ENCODE measurements at regions of chr9 and their contacts with region 1.

Region 1: DNA sequence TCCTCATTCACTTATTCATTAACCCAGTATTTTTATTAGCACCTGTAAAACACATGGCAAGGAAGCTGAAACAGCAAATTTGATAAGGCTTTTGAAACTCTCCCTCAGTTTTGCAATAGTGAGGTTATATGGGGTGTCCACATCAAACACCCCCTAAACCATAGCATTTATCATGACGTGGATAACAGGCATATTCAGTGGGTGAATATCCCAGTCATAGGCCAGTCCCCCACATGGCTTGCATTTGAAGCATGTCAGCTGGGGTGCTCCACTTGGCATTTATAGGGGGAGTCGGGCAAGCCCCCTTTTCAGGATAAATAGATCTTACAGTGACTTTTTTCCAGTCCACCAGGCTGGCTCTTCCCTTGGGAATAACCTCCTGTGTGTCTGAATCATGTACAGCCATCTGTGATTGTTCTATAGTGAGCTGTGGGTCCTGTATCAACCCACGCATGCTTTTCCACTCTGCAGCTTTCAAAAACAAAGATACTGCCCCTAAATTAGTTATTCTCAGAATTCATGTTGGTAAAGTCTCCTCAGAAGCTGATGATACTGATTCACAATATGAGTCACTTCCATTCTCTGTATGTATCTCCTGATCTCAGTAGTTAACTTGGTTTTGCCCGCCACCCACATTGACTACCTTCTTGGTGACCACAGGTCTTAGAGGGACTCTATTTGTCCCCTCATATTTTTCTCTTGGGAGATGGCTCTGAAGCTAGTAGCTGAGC is 84.4 kb upstream of the SPIN1 start:
- DNase-seq: peak; percentile 48
- H3K4me3 Mint-ChIP-seq: peak overlapping the region; percentile 40
- H3K27ac Mint-ChIP-seq: peak overlapping the region; percentile 87
- H3K4me1 Mint-ChIP-seq: peaks cover 52% of the 10 kb centered on the region
- H3K27me3 Mint-ChIP-seq: peaks cover 2% of the 10 kb centered on the region

Region 2: DNA sequence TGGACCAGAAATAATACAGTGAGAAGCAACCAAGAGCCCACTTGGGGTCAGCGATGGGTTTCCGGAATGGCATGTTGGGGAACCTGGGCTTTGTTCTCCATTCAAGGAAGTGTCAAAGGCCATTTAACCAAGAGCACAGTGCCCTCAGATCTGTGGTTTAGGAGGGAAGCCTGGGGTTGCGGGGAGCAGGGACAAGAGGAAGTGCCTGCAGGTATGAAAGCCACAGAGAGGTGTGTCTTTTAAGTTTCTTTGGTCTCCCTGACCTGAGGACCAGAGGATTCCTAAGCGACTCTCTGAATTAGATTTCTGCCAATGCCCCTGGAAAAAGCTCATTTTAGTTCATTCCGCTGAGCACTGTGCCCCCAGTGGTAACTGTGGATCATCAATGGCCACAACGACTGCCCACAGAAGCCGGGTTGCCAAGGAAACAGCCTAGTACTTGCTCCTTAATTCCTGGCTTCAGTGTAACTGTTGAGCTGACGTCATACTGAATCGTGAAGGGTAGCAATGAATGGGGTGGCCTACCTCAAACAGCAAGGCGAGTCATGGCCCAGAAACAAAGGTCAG is 23.0 kb before region 1 on chr9:
- intact Hi-C with region 1: loop called (anchors 2 kb)
- DNase-seq: no peak
- H3K4me3 Mint-ChIP-seq: peak overlapping the region; percentile 20
- H3K27ac Mint-ChIP-seq: peak overlapping the region; percentile 11
- H3K4me1 Mint-ChIP-seq: peaks cover 17% of the 10 kb centered on the region
- H3K27me3 Mint-ChIP-seq: peaks cover 4% of the 10 kb centered on the region

Region 3: DNA sequence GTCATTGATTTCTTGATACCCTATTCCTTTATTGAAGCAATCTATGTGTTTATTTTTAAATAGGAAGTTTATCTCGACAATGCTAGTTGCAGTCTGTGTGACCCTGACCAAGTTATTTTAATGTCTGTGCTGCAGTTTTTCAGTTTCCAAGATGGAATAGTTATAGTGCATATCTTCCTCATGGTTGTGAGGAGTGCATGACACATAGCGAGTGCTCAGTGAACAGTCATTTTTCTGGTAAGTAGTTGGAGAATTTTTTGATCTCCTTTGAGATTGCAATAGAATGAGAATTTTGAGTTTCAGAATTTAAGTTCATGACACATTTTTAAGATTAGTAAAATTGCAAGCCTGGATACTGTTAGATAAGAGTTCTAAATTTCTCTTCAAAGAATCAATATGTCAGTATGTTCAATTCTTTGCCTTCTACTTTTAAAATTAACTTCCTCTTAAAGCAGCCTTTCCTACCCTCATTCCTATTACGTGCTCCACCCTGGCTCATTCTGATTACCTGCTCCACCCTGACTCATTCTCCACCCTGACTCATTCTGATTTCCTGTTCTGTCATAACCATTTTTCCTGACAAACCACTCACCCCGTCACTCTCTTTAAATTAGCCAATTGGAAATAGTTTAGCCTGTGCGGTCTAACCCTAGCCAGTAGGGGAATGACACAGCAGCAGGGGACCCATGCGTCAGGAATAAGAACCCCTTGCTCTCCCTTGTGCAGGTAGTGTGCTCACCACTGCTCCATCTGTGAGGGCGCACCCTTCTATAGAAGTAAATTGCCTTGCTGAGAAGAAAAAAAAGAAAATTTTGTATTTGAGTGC is 115.0 kb after region 1 on chr9:
- intact Hi-C with region 1: loop called (anchors 1 kb)
- DNase-seq: peak; percentile 18
- H3K4me3 Mint-ChIP-seq: no peak overlapping the region
- H3K27ac Mint-ChIP-seq: peak overlapping the region; percentile 78
- H3K4me1 Mint-ChIP-seq: peaks cover 20% of the 10 kb centered on the region
- H3K27me3 Mint-ChIP-seq: no peaks in the 10 kb centered on the region

Region 4: GRCh38 chr9:88975966-88976889 is 672.3 kb after region 1 on chr9:
- intact Hi-C with region 1: loop called (anchors 2 kb)
- DNase-seq: no peak
- H3K4me3 Mint-ChIP-seq: no peak overlapping the region
- H3K27ac Mint-ChIP-seq: peak overlapping the region; percentile 41
- H3K4me1 Mint-ChIP-seq: peaks cover 5% of the 10 kb centered on the region
- H3K27me3 Mint-ChIP-seq: peaks cover 4% of the 10 kb centered on the region

Region 5: GRCh38 chr9:89318123-89319014 is 1014.5 kb after region 1 on chr9 and contains the start of gene SECISBP2:
- intact Hi-C with region 1: loop called (anchors 10 kb)
- DNase-seq: peak; percentile 93
- H3K4me3 Mint-ChIP-seq: peak within 1 kb of the TSS; percentile 90
- H3K27ac Mint-ChIP-seq: peak within 1 kb of the TSS; percentile 95
- H3K4me1 Mint-ChIP-seq: peaks cover 72% of the 10 kb centered on the region
- H3K27me3 Mint-ChIP-seq: no peaks in the 10 kb centered on the region
- total RNA-seq, gene SECISBP2: 49.4 and 54.9 TPM in 2 replicates